Activated CD4-positive, alpha-beta T cell treated with anti-CD3 and anti-CD28 coated beads for 36 hours (primary cell): ENCODE measurements at regions of chr12 and their contacts with region 1.

Region 1: GRCh38 chr12:56688129-56688845 is at the start of gene PTGES3:
- DNase-seq: peak; percentile 99
- ATAC-seq: peak; percentile 85
- H3K4me3 Mint-ChIP-seq: peak within 1 kb of the TSS; percentile 99
- H3K27ac Mint-ChIP-seq: peak within 1 kb of the TSS; percentile 100
- H3K4me1 Mint-ChIP-seq: peaks cover 11% of the 10 kb centered on the region
- H3K27me3 Mint-ChIP-seq: no peaks in the 10 kb centered on the region
- total RNA-seq, gene PTGES3: 284 to 386 TPM

Region 2: DNA sequence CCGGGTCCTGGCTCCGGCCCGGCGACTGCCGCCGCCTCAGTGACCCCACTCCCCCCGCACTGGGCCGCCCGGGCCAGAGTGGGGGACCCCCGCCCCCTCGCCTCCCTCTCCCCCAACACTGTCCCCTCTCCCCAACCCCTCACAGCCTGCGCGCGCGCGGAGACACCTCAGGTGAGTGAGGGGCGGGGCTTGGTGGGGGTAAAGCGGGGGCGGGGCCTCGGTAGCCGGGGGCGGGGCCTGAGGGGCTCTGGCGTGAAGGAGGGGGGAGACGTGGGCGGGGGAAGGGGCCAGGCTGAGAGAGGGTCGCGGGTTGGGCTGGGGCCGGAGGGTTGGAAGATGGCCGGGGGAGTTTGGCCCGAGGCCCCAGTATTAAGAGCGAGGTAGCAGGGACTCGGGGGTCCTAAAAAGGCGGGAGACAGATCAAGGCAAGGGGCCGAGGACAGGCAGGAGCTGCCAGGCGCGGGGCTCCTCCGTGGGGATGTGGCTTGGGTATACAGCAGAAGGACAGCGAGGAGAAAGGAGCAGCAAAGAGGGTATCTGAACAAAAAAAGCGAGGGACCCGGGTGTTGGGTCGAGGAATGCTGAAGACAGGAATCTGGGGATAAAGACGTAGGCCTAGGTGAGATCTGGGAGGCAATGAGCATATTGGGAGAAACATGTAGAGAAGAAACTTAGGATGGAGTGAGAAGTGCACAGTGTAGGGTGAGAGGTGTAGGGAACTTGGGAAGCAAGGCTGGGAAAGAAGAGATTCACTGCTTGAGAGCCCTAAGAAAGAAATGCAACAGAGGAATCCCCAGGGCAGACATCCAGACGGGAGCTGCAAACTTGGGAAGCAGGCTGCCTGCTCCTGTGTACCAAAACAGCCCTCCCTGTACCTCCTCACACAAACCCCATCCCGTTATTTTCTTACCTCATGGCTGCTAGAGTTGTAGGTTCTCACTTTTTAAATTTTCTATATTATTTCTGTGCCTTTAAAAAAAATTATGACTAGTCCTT is 680.4 kb before region 1 on chr12:
- CTCF ChIA-PET with region 1: no interaction called
- POLR2A ChIA-PET with region 1: no interaction called
- intact Hi-C with region 1: no loop called
- DNase-seq: peak; percentile 82
- ATAC-seq: peak; percentile 83
- H3K4me3 Mint-ChIP-seq: peak overlapping the region; percentile 78
- H3K27ac Mint-ChIP-seq: peak overlapping the region; percentile 92
- H3K4me1 Mint-ChIP-seq: peaks cover 28% of the 10 kb centered on the region
- H3K27me3 Mint-ChIP-seq: no peaks in the 10 kb centered on the region

Region 3: DNA sequence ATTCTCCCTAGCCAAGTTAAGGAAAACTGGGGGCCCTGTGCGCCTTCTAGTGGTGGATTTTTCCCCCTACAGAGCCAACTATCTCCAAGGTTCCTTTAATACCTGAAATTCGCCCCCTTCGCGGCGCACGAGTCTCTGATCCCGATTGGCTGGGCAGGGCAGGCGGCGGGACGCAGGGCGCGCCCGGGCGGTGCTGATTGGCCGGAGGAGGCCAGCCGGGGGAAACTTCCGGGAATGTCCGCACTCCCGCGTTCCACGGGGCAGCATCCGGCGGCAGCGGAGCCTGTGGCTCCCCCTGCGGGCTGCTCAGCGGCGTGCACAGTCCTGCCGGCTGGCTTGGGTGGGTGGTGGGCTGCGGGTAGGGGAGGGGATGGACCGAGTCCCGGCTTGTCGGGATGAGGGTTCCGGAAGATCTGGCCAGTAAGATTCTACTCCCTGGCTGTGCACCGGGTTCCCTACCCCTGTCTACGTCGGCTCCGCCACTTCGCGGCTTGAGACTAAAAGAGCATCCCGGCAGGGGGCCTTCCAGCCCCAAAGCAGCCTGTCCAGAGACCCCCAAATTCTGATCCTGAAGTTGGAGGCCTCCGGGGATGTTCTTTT is 464.1 kb before region 1 on chr12 and contains the start of gene NABP2:
- CTCF ChIA-PET with region 1: no interaction called
- POLR2A ChIA-PET with region 1: no interaction called
- intact Hi-C with region 1: loop called in 1 of 2 experiments (anchors 1 kb)
- DNase-seq: peak; percentile 98
- ATAC-seq: peak; percentile 83
- H3K4me3 Mint-ChIP-seq: peak within 1 kb of the TSS; percentile 98
- H3K27ac Mint-ChIP-seq: peak within 1 kb of the TSS; percentile 88
- H3K4me1 Mint-ChIP-seq: peaks cover 37% of the 10 kb centered on the region
- H3K27me3 Mint-ChIP-seq: no peaks in the 10 kb centered on the region
- total RNA-seq, gene NABP2: 69.1 to 76.0 TPM

Region 4: GRCh38 chr12:56468216-56469006 is 219.9 kb before region 1 on chr12 and contains the start of gene SPRYD4:
- CTCF ChIA-PET with region 1: no interaction called
- POLR2A ChIA-PET with region 1: no interaction called
- intact Hi-C with region 1: loop called in 1 of 2 experiments (anchors 1 kb)
- DNase-seq: peak; percentile 96
- ATAC-seq: peak; percentile 90
- H3K4me3 Mint-ChIP-seq: peak within 1 kb of the TSS; percentile 91
- H3K27ac Mint-ChIP-seq: peak within 1 kb of the TSS; percentile 99
- H3K4me1 Mint-ChIP-seq: peaks cover 40% of the 10 kb centered on the region
- H3K27me3 Mint-ChIP-seq: no peaks in the 10 kb centered on the region
- total RNA-seq, gene SPRYD4: 3.1 TPM

Region 5: DNA sequence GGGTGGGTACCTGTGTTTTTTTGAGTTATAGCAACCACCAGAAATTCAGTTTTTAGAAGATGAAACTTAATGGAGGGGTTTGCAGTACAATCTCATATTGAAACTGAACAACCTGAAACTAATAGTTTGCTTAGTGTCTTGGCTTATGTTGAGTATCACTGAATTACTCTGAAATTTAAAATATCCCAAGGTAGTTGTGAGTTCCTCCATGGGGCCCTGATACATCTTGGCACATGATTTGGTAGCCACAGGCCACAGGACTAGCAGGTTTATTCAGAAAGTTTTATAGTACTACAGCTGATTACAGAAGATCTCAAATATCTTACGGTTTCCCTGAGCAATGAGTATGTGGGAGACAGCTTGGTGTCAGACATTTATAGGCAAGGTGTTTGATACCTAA is 10.6 kb before region 1 on chr12:
- CTCF ChIA-PET with region 1: no interaction called
- POLR2A ChIA-PET with region 1: interaction called, 4 read pairs
- intact Hi-C with region 1: loop called in 1 of 2 experiments (anchors 1 kb)
- DNase-seq: peak; percentile 52
- ATAC-seq: peak; percentile 90
- H3K4me3 Mint-ChIP-seq: no peak overlapping the region
- H3K27ac Mint-ChIP-seq: peak overlapping the region; percentile 20
- H3K4me1 Mint-ChIP-seq: peaks cover 75% of the 10 kb centered on the region
- H3K27me3 Mint-ChIP-seq: no peaks in the 10 kb centered on the region

Region 6: DNA sequence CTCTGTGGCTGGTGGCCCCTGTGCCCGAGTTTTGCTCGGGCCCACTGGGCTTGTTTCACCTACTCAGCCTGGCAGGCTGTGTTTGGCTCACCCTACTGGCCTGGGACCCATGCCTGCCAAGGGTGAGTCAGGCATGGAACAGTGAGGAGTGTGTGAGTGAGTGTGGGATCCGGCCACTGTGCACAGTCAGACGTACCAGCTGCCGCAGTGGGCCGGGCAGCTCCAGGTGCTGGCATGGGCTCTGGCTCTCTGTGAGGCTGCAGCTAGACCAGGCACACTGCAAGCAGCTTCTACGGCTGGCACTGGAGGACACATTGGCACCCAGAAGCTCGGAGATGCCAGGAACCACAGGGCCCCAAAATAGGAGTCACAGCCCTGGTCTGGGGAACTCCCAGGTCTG is 115.5 kb after region 1 on chr12:
- CTCF ChIA-PET with region 1: no interaction called
- POLR2A ChIA-PET with region 1: no interaction called
- intact Hi-C with region 1: no loop called
- DNase-seq: no peak
- ATAC-seq: no peak
- H3K4me3 Mint-ChIP-seq: no peak overlapping the region
- H3K27ac Mint-ChIP-seq: no peak overlapping the region
- H3K4me1 Mint-ChIP-seq: no peaks in the 10 kb centered on the region
- H3K27me3 Mint-ChIP-seq: no peaks in the 10 kb centered on the region

Region 7: GRCh38 chr12:57063991-57064685 is 375.9 kb after region 1 on chr12:
- CTCF ChIA-PET with region 1: no interaction called
- POLR2A ChIA-PET with region 1: interaction called, 4 read pairs
- intact Hi-C with region 1: loop called in 1 of 2 experiments (anchors 1 kb)
- DNase-seq: peak; percentile 80
- ATAC-seq: peak; percentile 79
- H3K4me3 Mint-ChIP-seq: peak overlapping the region; percentile 76
- H3K27ac Mint-ChIP-seq: peak overlapping the region; percentile 98
- H3K4me1 Mint-ChIP-seq: peaks cover 66% of the 10 kb centered on the region
- H3K27me3 Mint-ChIP-seq: no peaks in the 10 kb centered on the region

Region 8: DNA sequence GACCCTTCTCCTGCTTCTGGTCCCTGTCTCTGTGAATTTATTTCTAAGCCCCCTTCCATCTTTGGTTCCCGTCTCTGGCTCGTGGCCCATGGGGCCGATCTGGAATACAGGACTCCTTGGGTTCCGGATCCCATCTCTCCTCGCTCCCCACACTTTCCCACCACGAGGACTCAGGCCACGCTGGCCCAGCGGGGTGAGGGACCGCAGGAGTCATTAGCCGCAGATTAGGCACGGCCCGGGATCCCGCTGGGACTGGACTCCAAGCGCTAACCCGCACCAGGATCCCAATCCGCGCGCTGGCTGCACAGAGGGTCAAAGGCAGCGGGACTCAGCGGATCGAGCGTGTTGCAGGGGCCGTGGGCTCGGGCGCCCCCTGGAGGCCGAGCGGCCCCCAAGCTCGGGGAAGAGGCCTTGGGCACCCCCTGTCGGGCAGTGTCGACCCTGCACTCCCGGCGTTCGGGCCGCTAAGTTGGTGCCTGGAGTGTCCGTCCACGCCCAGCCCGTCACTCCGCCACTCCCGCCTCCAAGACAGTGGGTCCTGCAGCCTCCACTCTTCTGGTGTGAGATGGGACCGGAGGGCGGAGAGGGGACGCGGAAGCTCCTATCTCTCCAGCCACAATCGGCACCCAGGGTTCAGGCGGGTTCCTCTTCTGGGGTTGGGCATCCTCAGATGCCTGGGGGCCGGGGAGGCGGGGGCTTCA is 550.7 kb after region 1 on chr12:
- CTCF ChIA-PET with region 1: no interaction called
- POLR2A ChIA-PET with region 1: no interaction called
- intact Hi-C with region 1: loop called in 1 of 2 experiments (anchors 5 kb)
- DNase-seq: peak; percentile 94
- ATAC-seq: peak; percentile 57
- H3K4me3 Mint-ChIP-seq: peak overlapping the region; percentile 83
- H3K27ac Mint-ChIP-seq: peak overlapping the region; percentile 80
- H3K4me1 Mint-ChIP-seq: peaks cover 70% of the 10 kb centered on the region
- H3K27me3 Mint-ChIP-seq: peaks cover 44% of the 10 kb centered on the region